ENCODE measurements at regions of chr11 and their contacts with region 1.

Region 1: DNA sequence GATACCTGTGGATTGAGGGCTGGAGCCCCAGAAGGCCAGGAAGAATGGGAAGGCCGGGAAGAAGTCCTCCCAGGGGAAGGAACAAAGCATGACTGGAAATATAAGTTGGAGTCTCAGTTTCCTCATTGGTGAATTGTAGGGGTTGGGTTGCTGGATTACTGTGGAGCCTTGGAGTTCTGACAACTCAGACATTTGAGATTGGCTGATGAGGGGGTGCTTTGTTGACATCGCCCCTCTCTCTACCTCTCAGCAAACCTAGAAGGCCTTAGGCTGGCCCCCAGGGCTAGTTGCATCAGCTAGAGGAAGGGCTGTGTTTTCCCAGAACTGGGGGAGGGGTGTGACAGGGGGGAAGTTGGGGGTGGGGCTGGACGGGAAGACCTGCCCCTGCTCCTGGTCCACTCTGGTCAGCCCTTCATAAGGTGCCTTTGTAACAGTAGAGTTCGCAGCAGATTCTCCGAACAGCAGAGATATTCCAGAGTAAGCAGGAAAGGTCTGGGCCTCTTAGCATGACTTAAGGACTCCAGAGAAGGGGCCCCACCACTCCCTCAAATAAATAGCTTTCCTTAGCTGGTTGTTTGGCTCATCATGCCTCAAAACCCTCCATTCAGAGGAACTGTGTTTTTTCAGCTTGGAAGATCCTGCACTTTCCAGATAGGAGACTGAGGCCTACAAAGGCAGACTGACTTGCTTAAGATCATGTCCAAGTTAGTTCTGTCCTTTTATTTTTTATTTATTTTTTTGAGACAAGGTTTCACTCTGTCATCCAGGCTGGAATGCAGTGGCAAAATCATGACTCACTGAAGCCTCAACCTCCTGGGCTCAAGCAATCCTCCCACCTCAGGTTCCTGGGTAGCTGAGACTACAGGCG is 12.5 kb upstream of the THRSP start:
- DNase-seq: peak; percentile 84 to 94 (median 90)
- ATAC-seq: peak; percentile 88
- H3K4me3 ChIP-seq: no peak overlapping the region
- H3K27ac ChIP-seq: peak overlapping the region; percentile 94
- H3K4me1 ChIP-seq: peaks cover 21 to 34% of the 10 kb centered on the region in 2 experiments
- H3K27me3 ChIP-seq: no peaks in the 10 kb centered on the region
- CTCF ChIP-seq: no peak
- EP300 ChIP-seq: peak; percentile 68; the same call in 1 of the 2 replicates
- POLR2A ChIP-seq: peak; percentile 66
- RAD21 ChIP-seq: no peak

Region 2: DNA sequence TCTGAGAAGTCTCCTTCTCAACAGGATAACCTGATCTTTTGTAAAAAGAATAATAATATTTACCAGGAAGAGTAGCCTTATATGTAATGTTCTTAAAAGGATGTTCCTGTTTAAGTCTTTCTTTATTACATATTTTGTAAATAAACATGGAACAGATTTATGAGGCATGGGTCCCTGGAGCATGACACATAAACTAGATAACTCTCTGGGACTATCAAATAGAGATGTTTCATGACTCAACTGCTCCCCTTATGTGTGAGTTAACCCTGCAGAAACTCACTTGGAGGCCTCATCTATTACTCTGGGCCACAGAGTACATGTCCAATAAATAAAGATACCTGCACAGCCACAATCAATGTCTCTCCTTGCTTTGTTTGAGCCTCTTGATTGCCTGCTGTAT is 814.3 kb before region 1 on chr11:
- CTCF ChIA-PET with region 1: no interaction called
- POLR2A ChIA-PET with region 1: no interaction called
- in situ Hi-C with region 1: no loop called
- intact Hi-C with region 1: no loop called
- DNase-seq: no peak
- ATAC-seq: no peak
- H3K4me3 ChIP-seq: no peak overlapping the region
- H3K27ac ChIP-seq: no peak overlapping the region
- H3K4me1 ChIP-seq: no peaks in the 10 kb centered on the region
- H3K27me3 ChIP-seq: no peaks in the 10 kb centered on the region; a peak in 1 of 5 replicates
- CTCF ChIP-seq: no peak
- EP300 ChIP-seq: no peak
- POLR2A ChIP-seq: no peak
- RAD21 ChIP-seq: no peak

Region 3: GRCh38 chr11:78079232-78080083 is 28.3 kb after region 1 on chr11 and contains the start of gene NDUFC2:
- CTCF ChIA-PET with region 1: interaction called, 3 read pairs
- POLR2A ChIA-PET with region 1: interaction called, 5 read pairs
- in situ Hi-C with region 1: no loop called
- intact Hi-C with region 1: loop called (anchors 1 kb)
- DNase-seq: peak; percentile 79 to 92 (median 80)
- ATAC-seq: peak; percentile 83
- H3K4me3 ChIP-seq: peak within 1 kb of the TSS; percentile 92
- H3K27ac ChIP-seq: peak within 1 kb of the TSS; percentile 90
- H3K4me1 ChIP-seq: peaks cover 23 to 35% of the 10 kb centered on the region in 2 experiments
- H3K27me3 ChIP-seq: no peaks in the 10 kb centered on the region
- CTCF ChIP-seq: 0 out of 6 replicates have a peak, but pooled peaks of 1 of the 3 experiments have one; percentile 1
- EP300 ChIP-seq: peak; percentile 74
- POLR2A ChIP-seq: peak; percentile 91
- RAD21 ChIP-seq: 0 out of 4 replicates have a peak, but pooled peaks of 1 of the 2 experiments have one; percentile 8
- polyA plus RNA-seq, gene NDUFC2: 987 to 1,119 TPM

Region 4: DNA sequence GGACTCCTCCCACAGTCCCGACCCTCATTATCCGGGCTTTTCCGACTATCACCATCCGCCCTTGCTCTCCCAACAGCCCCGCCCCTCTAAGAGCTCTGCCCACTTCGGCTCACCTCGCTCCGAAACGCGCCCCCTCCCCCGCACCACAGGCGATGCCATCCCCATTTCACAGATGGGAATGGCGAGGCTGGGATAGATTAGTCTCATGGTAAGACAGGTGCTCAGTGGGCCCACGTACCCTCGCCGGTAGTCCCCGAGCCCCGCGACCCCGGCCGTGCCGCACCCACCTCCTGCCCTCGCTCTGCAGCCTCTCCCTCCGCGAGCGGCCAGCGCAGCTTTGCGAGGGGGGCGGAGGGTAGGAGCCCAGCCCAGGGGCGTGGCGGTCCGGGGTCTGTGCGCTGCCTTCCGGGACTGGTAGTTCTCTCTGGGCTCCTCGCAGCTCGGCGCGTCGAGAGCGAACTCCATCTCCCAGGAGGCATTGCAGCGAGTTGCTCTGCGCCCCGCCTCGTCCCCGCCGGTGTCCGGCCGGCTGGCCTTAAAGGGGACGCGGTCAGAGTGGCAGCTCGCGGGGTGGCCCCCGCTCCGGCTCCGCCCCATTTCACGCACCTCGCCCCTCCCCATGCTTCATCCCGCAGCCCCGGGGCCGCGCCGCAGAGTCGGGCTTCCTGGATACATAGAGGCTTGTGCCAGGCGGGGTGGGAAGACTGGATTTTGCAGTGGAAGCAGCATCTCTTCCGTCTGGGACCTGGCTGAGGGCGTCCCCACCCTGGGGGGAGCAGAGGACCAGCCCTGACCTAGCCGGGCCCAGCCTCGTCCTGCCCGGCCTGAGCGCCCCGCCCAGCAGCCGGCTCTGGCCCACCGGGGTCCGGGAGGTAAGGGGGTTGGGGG is 137.3 kb after region 1 on chr11 and contains the starts of genes KCTD21 and USP35:
- CTCF ChIA-PET with region 1: no interaction called
- POLR2A ChIA-PET with region 1: no interaction called
- in situ Hi-C with region 1: no loop called
- intact Hi-C with region 1: loop called (anchors 5 kb)
- DNase-seq: peak; percentile 96 to 98 (median 96)
- ATAC-seq: peak; percentile 98
- H3K4me3 ChIP-seq: peak within 1 kb of the TSS; percentile 73
- H3K27ac ChIP-seq: peak within 1 kb of the TSS; percentile 41
- H3K4me1 ChIP-seq: peaks cover 41 to 44% of the 10 kb centered on the region in 2 experiments
- H3K27me3 ChIP-seq: no peaks in the 10 kb centered on the region
- CTCF ChIP-seq: no peak
- EP300 ChIP-seq: 0 out of 2 replicates have a peak, but pooled peaks have one; percentile 0
- POLR2A ChIP-seq: peak; percentile 62; the same call in 1 of the 2 replicates
- RAD21 ChIP-seq: no peak; a peak in 1 of 4 replicates
- polyA plus RNA-seq, gene KCTD21: 0.34 to 0.80 TPM
- polyA plus RNA-seq, gene USP35: 0.01 to 0.07 TPM

Measured in K562 (cell line).